Activated T-helper 1 cell treated with anti-CD3 and anti-CD28 coated beads, Interleukin-12 subunit alpha, Interleukin-12 subunit beta, Interleukin-2, Interleukin-4 antibody, amounts not matched to agents 30 ng/mL and 10 ng/mL and 1 ng/mL, durations not matched to agents 14 hours and 24 hours and 36 hours (primary cell): ENCODE measurements at regions of chr11 and their contacts with region 1.

Region 1: DNA sequence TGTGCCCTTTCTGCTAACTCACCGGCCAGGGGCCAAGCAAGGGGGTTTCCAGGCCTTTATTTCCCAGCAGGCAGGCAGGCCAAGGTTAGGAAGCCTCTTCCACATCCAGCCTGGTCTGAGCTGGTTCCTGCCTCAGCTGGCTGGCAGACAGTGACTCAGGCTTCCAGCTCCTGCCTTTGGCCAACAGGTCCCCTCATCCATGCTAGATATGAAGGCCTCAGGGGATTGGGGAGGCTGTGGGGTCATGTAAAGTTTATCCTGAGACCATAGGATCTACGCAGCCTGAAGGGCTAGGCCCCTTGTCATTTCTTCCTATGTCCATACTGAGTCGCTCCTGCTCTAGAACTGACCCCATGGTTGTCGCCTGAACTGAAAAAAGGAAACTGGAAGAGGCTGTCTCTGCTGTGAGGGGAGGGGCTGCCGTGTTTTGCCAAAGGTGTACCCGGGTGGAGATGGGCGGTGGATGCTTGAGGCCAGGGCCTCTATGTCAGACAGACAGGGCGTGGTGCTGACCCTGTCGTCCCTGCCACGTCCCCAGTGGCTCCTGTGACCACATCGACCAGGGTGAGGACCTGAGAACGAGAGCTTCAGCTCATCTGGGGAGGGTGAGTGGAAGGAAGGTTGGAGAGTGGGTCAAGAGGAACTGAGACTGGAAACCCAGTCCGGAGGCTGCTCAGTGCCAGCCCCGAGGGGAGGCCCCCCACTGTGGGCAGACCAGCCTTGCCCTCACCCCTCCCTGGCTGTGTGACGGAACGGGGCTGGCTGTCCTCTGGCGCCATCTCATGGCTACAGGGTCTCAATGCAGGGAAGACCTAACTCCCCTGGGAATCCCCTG is 17.0 kb downstream of the P2RY6 start:
- DNase-seq: peak; percentile 36
- H3K4me3 Mint-ChIP-seq: peak overlapping the region; percentile 23
- H3K27ac Mint-ChIP-seq: no peak overlapping the region
- H3K4me1 Mint-ChIP-seq: peaks cover 29% of the 10 kb centered on the region
- H3K27me3 Mint-ChIP-seq: peaks cover 4% of the 10 kb centered on the region

Region 2: GRCh38 chr11:73184953-73185671 is 104.0 kb before region 1 on chr11:
- intact Hi-C with region 1: loop called (anchors 1 kb)
- DNase-seq: peak; percentile 40
- H3K4me3 Mint-ChIP-seq: no peak overlapping the region
- H3K27ac Mint-ChIP-seq: no peak overlapping the region
- H3K4me1 Mint-ChIP-seq: peaks cover 13% of the 10 kb centered on the region
- H3K27me3 Mint-ChIP-seq: peaks cover 21% of the 10 kb centered on the region

Region 3: GRCh38 chr11:73252577-73253195 is 36.4 kb before region 1 on chr11:
- intact Hi-C with region 1: loop called (anchors 2 kb)
- DNase-seq: no peak
- H3K4me3 Mint-ChIP-seq: no peak overlapping the region
- H3K27ac Mint-ChIP-seq: no peak overlapping the region
- H3K4me1 Mint-ChIP-seq: no peaks in the 10 kb centered on the region
- H3K27me3 Mint-ChIP-seq: peaks cover 2% of the 10 kb centered on the region